HEK293 (cell line): ENCODE measurements at regions of chr17 and their contacts with region 1.

Region 1: DNA sequence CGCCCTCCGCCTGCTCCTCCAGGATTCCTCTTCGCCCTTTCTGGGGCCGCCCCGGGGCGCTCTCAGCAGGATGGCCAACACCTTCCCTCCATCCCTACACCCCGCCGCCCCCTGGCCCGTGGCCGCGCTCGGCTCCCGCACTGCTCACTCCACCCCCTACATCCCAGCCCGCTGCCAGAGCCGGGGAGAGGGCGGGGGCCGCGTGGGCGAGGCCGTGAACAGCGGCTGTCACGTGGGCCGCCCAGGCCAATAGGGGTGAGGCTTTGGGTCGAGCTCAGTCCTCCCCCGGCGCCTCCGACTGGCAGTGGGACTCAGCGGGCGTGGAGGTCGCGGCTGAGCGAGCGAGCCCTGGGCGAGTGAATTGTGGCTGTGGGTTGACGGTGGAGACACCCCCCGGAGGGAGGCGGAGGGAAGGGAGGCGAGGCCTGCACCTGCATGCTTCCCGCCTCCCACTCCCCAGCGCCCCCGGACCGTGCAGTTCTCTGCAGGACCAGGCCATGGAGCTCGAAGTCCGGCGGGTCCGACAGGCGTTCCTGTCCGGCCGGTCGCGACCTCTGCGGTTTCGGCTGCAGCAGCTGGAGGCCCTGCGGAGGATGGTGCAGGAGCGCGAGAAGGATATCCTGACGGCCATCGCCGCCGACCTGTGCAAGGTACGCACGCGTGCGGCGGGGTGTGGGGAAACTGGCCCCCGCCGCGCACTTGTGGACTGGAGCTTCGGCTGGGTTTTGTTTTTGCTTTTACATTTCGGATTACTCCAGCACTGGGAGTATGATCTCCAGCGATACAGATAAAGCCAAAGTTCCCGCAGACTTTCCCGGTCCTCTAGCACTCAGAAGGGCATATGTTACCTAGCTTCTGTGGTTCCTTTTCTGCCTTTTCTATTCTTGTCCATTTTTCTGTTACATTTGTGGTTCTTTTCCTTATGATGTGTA is at the start of gene ALDH3A2:
- H3K4me3 ChIP-seq: peak within 1 kb of the TSS; percentile 86
- H3K27ac ChIP-seq: peak within 1 kb of the TSS; percentile 74
- H3K4me1 ChIP-seq: peaks cover 21% of the 10 kb centered on the region
- CTCF ChIP-seq: peak; percentile 77

Region 2: GRCh38 chr17:19377602-19378392 is 270.9 kb before region 1 on chr17:
- CTCF ChIA-PET with region 1: no interaction called
- POLR2A ChIA-PET with region 1: interaction called, 29 read pairs
- H3K4me3 ChIP-seq: peak overlapping the region; percentile 80
- H3K27ac ChIP-seq: peak overlapping the region; percentile 72
- H3K4me1 ChIP-seq: peaks cover 8% of the 10 kb centered on the region
- CTCF ChIP-seq: no peak; the same call in 1 of the 2 replicates

Region 3: GRCh38 chr17:19533718-19534561 is 114.8 kb before region 1 on chr17 and contains the start of gene SLC47A1:
- CTCF ChIA-PET with region 1: no interaction called
- POLR2A ChIA-PET with region 1: interaction called, 22 read pairs
- H3K4me3 ChIP-seq: peak within 1 kb of the TSS; percentile 63
- H3K27ac ChIP-seq: peak within 1 kb of the TSS; percentile 58; the same call in 1 of the 2 replicates
- H3K4me1 ChIP-seq: 0 out of 2 replicates have a peak, but pooled peaks cover 2% of the 10 kb centered on the region
- CTCF ChIP-seq: peak; percentile 9; the same call in 1 of the 2 replicates

Region 4: DNA sequence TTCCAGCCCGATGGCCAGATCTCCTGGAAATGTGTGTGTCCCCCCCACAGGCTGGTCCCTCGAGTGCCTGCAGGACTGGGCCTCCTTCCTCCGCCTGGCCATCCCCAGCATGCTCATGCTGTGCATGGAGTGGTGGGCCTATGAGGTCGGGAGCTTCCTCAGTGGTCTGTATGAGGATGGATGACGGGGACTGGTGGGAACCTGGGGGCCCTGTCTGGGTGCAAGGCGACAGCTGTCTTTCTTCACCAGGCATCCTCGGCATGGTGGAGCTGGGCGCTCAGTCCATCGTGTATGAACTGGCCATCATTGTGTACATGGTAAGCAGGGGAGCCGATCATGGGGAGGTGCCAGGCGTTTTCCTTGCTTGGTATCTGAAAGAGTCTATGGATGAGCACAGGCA is 93.0 kb before region 1 on chr17:
- CTCF ChIA-PET with region 1: no interaction called
- POLR2A ChIA-PET with region 1: no interaction called
- H3K4me3 ChIP-seq: no peak overlapping the region
- H3K27ac ChIP-seq: no peak overlapping the region
- H3K4me1 ChIP-seq: no peaks in the 10 kb centered on the region
- CTCF ChIP-seq: no peak

Region 5: DNA sequence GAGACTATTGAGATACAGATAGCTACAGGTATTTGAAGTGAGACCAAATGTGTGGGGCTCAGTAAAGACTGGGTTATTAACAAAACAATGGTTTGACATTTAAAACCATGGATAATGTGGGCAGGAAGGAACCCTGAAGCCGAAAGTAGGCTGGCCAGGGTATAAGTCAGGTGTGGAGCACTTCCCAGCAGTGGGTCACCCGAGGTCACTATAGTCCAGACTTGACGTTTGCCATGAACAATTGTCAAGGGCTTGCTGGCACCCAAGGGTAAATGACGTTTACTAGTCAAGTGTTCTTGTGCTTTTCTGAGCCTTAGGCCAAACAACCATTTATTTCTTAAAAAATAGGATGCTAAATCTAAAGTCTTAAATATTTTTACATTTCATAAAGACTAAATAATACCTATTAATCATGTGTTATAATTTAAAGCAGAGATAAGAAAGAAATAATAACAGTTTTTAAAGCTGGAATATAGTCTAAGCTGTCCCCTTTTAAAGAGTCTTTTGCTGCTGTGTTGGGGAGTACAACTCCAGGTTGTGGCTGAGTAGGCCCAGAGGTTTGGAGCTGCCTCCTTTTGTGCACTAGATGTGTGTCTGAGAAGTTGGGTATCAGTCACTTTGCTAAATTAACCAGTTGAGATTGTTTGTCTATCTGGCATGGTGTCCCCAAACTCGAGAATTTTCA is 15.5 kb after region 1 on chr17:
- CTCF ChIA-PET with region 1: interaction called, 7 read pairs
- POLR2A ChIA-PET with region 1: interaction called, 12 read pairs
- H3K4me3 ChIP-seq: no peak overlapping the region
- H3K27ac ChIP-seq: no peak overlapping the region
- H3K4me1 ChIP-seq: peaks cover 3% of the 10 kb centered on the region; the same call in 1 of the 2 replicates
- CTCF ChIP-seq: no peak

Region 6: GRCh38 chr17:19744922-19745757 is 96.4 kb after region 1 on chr17:
- CTCF ChIA-PET with region 1: interaction called, 6 read pairs
- POLR2A ChIA-PET with region 1: interaction called, 22 read pairs
- H3K4me3 ChIP-seq: peak overlapping the region; percentile 35
- H3K27ac ChIP-seq: no peak overlapping the region; the same call in 1 of the 2 replicates
- H3K4me1 ChIP-seq: peaks cover 3% of the 10 kb centered on the region; the same call in 1 of the 2 replicates
- CTCF ChIP-seq: peak; percentile 74